ENCODE measurements at regions of chr5 and their contacts with region 1.

Region 1: GRCh38 chr5:81165493-81166119 is 67.5 kb upstream of the CKMT2 start:
- DNase-seq: peak; percentile 82
- H3K4me3 Mint-ChIP-seq: no peak overlapping the region
- H3K27ac Mint-ChIP-seq: no peak overlapping the region
- H3K4me1 Mint-ChIP-seq: no peaks in the 10 kb centered on the region
- H3K27me3 Mint-ChIP-seq: peaks cover 33% of the 10 kb centered on the region
- CTCF ChIP-seq: peak; percentile 72

Region 2: DNA sequence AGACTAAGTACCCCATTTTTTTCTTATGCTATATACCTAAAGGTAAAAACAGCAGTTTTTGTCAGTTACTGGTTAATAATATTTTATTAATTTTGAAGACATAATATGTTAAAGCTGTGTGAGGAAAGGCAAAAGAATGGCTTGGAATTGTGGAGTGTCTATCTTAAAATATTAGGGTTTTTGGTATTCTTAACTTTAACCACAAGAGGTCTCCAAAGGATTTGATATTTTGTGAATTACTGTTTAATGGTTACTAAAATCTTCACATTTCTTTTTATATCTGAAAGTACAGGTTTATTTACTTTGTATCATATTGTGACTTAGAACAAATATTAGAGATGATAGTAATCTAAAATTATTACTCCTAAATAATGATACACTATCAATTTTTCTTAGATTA is 478.8 kb before region 1 on chr5:
- CTCF ChIA-PET with region 1: interaction called, 5 read pairs
- POLR2A ChIA-PET with region 1: interaction called, 3 read pairs
- intact Hi-C with region 1: loop called (anchors 1 kb)
- DNase-seq: peak; percentile 25
- H3K4me3 Mint-ChIP-seq: no peak overlapping the region
- H3K27ac Mint-ChIP-seq: no peak overlapping the region
- H3K4me1 Mint-ChIP-seq: no peaks in the 10 kb centered on the region
- H3K27me3 Mint-ChIP-seq: no peaks in the 10 kb centered on the region
- CTCF ChIP-seq: peak; percentile 29

Region 3: DNA sequence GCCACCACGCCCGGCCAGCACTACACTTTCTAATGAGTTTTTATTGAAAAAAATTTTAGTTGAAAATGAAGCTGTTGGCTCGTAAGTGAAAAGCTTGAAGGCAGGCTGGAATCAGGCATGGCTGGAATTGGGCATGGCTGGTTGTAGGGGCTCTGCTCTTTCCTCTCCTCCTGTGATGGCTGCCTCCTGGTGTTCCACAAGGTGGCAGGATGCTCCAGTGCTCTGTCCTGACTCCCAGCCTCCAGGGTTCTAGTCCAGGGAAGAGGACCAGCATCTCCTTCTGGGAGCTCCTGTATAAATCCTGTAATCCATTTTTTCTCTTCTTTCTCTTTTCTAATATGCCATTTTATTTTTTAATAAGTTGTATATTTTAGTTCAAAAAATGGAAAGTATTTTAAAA is 453.7 kb before region 1 on chr5:
- CTCF ChIA-PET with region 1: interaction called, 4 read pairs
- POLR2A ChIA-PET with region 1: no interaction called
- intact Hi-C with region 1: loop called (anchors 1 kb)
- DNase-seq: peak; percentile 48
- H3K4me3 Mint-ChIP-seq: no peak overlapping the region
- H3K27ac Mint-ChIP-seq: no peak overlapping the region
- H3K4me1 Mint-ChIP-seq: no peaks in the 10 kb centered on the region
- H3K27me3 Mint-ChIP-seq: no peaks in the 10 kb centered on the region
- CTCF ChIP-seq: peak; percentile 41

Measured in MCF 10A (cell line).